ENCODE measurements at regions of chr15 and their contacts with region 1.

Region 1: DNA sequence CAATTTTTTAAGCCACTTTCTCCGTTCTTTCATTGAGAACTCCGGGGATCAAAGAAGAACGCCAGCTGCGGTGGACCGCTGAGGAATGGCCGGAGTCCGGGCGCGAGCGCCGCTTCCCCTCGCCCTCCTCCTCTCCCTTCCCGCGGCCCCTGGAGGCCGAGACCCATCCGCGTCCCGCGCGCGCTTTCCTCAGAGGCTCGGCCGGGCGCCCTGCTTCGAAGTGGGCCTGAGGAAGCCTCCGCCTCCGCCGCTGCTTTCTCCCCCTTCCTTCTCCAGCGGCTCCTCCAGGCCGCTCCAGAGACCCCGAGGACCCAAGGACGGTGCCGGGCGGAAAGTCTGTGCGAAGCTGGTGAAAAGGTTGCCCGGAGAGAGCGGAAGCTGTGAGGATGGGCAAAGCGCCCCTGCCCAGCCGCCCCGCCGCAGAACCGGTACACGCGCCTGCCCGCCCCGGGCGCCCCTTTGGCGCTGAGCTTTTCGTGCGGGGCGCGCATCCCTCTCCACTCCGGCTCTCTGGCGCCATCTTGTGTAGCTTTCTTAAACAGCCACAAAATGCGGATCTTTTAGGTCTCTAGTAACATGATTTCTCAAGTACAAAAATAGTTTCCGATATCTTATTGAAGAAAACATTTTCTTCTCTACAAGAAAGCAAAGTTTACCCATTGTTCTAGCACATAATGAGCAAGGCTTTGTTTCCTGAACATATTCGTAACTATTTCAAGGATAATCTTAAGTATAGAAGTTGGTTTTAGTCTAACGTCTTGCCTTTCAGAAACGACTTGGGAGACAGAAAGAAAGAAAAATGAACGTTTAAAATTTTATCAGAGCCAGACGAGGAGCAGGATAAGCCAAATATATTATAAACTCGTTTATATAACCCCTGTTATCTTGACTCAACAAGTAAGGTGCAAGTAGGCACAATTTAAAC is 59.2 kb upstream of the FAM174B start:
- DNase-seq: peak; percentile 80
- CTCF ChIP-seq: peak; percentile 91

Region 2: GRCh38 chr15:92091155-92091734 is 623.5 kb before region 1 on chr15:
- CTCF ChIA-PET with region 1: interaction called, 12 read pairs
- POLR2A ChIA-PET with region 1: no interaction called
- DNase-seq: no peak
- CTCF ChIP-seq: peak; percentile 35

Region 3: DNA sequence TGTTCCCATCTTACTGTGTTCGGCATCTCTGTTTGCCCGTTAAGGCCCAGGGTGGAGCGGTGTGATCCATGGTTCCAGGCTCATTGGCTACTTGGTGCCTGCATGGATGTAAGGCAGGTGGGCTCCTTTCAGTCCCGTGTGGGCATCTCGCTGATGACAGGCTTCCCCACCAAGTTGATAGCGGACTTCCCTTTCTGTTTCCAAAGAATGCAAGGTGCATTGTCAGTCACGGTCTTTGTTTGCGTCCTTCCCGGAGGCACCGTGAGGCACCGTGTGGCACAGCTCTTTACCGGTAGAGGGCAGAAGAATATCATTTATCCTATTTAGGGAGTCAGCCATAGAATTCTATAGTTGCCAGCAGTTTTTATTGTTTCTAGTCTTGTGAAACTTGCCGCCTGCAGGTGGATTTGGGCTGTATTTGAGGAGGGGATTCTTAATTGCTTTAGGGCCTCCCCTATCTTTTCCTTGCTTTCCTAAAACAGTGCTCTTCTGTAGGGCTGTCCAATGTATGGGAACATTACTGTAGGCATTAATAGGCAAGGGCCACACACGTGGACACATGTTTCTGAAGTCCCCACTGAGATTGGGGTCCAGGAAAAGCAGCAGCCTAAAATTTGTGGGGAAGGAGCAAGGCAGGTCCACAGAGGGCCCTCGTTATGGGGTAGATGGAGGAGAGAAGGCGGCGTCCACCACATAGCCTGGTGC is 617.1 kb before region 1 on chr15:
- CTCF ChIA-PET with region 1: interaction called, 12 read pairs
- POLR2A ChIA-PET with region 1: no interaction called
- DNase-seq: peak; percentile 70
- CTCF ChIP-seq: peak; percentile 80

Region 4: GRCh38 chr15:92521624-92522008 is 193.1 kb before region 1 on chr15:
- CTCF ChIA-PET with region 1: interaction called, 129 read pairs
- POLR2A ChIA-PET with region 1: interaction called, 4 read pairs
- DNase-seq: peak; percentile 57
- CTCF ChIP-seq: peak; percentile 70

Region 5: DNA sequence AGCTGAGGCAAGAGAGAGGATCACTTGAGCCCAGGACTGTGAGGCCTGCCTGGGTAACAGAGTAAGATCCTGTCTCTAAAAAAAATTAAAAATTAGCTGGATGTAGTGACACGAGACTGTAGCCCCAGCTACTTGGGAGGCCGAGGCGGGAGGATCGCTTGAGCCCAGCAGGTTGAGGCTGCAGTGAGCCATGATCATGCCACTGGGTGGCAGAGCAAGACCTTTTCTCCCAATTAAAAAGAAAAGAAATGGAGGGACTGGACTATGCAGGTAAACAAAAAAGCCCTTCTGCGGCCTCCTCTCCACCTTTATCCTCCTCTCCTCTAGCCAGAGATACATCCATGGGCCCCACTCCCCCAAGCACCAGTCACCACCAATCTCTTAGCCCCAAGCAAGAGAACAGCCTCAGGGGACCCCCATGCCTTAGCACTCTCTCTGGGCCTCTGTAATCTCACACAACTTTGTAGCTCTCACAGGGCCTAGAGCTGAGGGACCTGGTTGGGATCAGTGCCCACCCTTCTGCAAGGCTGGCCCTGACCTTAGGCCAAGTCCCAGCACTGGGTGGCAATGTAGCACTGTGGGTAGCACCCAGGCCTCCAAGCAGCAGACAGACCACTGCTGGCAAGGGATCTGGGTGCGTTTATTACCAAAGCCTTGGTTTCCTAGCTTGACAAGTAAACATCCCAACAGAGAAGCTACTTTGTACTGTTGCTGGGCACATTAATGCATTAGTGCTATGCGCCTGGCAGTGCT is 102.6 kb before region 1 on chr15:
- CTCF ChIA-PET with region 1: interaction called, 20 read pairs
- POLR2A ChIA-PET with region 1: no interaction called
- DNase-seq: no peak
- CTCF ChIP-seq: peak; percentile 57

Region 6: DNA sequence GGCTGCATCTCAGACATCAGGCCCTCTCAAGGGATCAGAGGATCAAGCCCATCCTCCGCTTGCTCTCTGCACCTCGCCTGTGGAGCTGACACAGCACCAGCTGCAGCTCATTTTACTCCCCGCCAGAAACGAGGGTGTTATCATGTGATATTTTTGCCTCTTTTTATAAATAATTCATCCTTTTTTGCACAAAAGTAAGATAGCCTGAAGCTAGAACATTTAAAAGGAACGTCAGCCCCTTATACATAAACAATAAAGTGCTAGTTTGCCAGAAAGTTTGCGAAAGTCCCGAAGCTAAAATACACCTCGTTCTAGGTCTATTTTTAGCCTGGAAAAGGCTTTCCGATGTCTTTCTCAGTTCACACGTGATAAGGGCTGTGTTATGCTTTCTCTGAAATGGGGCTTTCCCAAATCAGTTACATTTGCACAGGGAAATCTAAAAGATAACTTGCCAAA is 49.6 kb before region 1 on chr15:
- CTCF ChIA-PET with region 1: interaction called, 11 read pairs
- POLR2A ChIA-PET with region 1: no interaction called
- DNase-seq: no peak
- CTCF ChIP-seq: no peak

Region 7: DNA sequence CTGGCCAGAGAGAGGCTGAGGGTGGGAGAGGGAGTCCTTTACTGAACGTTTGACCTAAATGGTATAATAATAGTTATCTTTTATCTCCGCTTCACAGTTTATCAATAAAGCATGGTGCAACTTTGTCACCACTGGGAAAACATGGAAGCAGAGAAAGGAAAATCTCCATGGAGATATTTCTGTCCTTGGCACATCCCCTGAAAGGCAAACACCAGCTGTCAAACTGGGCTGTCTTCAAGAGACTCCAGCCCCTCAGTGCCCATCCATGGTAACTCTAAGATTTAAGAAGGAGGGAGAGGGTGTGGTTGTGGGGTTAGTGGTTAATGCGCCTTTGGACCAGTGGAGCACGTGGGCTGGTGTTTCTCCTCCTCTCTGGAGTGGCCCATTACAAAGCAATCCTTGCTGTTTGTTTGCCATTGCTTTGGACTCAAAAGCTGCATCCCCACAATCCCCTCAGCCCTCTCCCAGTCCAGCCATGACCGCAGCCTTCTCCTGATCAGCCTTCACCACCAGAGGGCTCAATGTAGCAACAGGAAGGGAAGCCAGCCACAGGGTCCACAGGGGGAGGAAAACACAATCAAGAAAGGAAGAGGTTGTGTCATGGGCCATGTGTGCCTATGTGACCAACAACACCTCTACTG is 20.9 kb before region 1 on chr15:
- CTCF ChIA-PET with region 1: interaction called, 11 read pairs
- POLR2A ChIA-PET with region 1: no interaction called
- DNase-seq: no peak
- CTCF ChIP-seq: peak; percentile 35